ENCODE measurements at regions of chr12 and their contacts with region 1.

Region 1: GRCh38 chr12:50074936-50075807 is 10.0 kb upstream of the SMARCD1 start:
- DNase-seq: peak; percentile 85
- H3K4me3 Mint-ChIP-seq: no peak overlapping the region
- H3K27ac Mint-ChIP-seq: peak overlapping the region; percentile 30
- H3K4me1 Mint-ChIP-seq: peaks cover 12% of the 10 kb centered on the region
- H3K27me3 Mint-ChIP-seq: no peaks in the 10 kb centered on the region
- CTCF ChIP-seq: peak; percentile 90

Region 2: DNA sequence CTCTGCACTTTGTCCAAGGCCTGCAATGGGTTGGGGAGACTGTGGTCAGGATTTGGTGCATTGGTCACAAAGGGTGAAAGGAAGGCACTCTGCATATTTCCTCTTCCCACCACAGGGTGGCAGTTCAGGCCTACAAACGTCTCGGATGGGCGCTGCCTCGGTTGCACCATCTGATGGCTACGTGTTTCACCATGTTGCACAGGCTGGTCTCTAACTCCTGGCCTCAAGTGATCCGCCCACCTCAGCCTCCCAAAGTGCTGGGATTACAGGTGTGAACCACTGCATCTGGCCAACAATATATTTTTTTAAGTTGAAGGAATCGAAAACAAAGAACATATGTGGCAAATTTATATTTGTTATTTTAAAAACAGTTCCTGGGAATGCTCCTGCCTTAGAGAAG is 298.8 kb before region 1 on chr12:
- CTCF ChIA-PET with region 1: interaction called, 6 read pairs
- POLR2A ChIA-PET with region 1: no interaction called
- intact Hi-C with region 1: loop called (anchors 1 kb)
- DNase-seq: peak; percentile 82
- H3K4me3 Mint-ChIP-seq: no peak overlapping the region
- H3K27ac Mint-ChIP-seq: peak overlapping the region; percentile 42
- H3K4me1 Mint-ChIP-seq: peaks cover 17% of the 10 kb centered on the region
- H3K27me3 Mint-ChIP-seq: peaks cover 20% of the 10 kb centered on the region
- CTCF ChIP-seq: peak; percentile 92

Region 3: GRCh38 chr12:49903695-49904423 is 171.3 kb before region 1 on chr12 and contains the start of gene FAIM2:
- CTCF ChIA-PET with region 1: no interaction called
- POLR2A ChIA-PET with region 1: no interaction called
- intact Hi-C with region 1: no loop called
- DNase-seq: no peak
- H3K4me3 Mint-ChIP-seq: no peak within 1 kb of the TSS
- H3K27ac Mint-ChIP-seq: no peak within 1 kb of the TSS
- H3K4me1 Mint-ChIP-seq: no peaks in the 10 kb centered on the region
- H3K27me3 Mint-ChIP-seq: peaks cover 41% of the 10 kb centered on the region
- CTCF ChIP-seq: no peak
- total RNA-seq, gene FAIM2: not detected in 2 replicates

Region 4: DNA sequence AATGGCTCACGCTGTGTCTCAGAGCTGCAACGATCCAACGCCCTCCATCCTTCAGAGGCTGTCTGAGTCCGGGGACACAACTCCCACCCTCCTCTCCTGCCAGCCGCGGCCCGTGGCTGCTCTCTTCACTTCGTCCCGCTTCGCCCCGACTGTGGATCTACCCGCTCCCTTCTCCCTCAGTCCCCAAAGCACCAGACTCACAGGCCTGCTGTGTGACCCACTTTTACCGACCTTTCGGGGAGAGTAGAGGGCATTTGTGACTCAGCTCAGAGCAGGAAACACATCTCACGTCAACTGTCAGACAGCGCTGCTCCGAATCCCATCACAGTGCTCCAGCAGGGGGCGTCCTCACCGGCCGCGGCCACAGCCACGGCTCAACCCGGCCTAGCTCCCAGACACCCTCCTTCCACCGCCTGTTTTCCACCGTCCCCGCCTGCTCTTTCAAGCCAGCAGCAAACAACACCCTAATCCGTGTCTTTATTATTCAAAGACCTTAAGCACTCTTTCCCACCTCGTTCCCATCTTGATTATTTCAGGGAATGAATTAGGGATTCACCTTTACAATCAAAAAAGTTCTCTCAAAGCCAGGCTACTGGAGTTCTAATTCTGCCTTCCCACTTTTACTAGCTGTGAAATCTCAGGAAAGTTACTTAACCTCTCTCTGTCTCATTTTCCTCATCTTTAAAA is 129.6 kb before region 1 on chr12:
- CTCF ChIA-PET with region 1: interaction called, 10 read pairs
- POLR2A ChIA-PET with region 1: no interaction called
- intact Hi-C with region 1: no loop called
- DNase-seq: peak; percentile 77
- H3K4me3 Mint-ChIP-seq: no peak overlapping the region
- H3K27ac Mint-ChIP-seq: peak overlapping the region; percentile 47
- H3K4me1 Mint-ChIP-seq: peaks cover 19% of the 10 kb centered on the region
- H3K27me3 Mint-ChIP-seq: no peaks in the 10 kb centered on the region
- CTCF ChIP-seq: peak; percentile 83

Region 5: GRCh38 chr12:50038336-50038735 is 36.8 kb before region 1 on chr12:
- CTCF ChIA-PET with region 1: interaction called, 35 read pairs
- POLR2A ChIA-PET with region 1: interaction called, 3 read pairs
- intact Hi-C with region 1: no loop called
- DNase-seq: no peak
- H3K4me3 Mint-ChIP-seq: no peak overlapping the region
- H3K27ac Mint-ChIP-seq: no peak overlapping the region
- H3K4me1 Mint-ChIP-seq: peaks cover 7% of the 10 kb centered on the region
- H3K27me3 Mint-ChIP-seq: no peaks in the 10 kb centered on the region
- CTCF ChIP-seq: no peak

Region 6: DNA sequence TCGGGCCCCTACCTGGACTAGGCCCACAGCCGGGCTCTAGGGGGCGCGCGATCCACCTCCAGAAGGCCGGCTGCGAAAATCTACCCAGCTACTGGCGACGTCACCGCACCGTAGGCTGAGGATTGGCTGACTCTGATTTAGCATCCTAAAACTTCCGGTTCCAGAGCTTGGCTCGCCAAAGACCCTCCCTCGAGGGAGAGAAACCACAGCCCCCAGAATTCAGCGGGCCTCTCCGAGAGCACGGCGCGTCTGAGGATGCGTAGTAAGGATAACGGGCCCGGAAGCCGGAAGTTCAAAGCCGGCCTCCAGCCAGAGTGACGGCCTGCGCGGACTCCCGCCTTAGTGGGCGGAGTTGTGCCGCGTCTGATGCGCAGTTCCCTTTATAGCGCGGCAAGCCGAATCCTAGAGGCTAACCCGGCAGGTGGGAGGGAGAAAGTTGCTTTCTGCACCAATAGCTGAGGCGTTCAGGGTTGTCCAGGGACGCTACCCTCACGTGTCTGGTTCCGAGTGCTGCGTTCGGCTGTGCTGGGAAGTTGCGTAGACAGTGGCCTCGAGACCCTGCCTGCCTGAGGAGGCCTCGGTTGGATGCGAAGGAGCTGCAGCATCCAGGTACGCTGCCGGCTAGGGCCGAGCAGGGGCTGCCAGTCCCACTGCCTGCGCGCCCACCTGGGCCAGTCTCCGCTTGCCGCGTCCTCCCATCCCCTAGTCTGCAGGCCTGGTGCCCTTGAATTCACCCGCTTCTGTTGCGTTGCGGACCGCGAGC is 36.7 kb after region 1 on chr12 and contains the start of gene COX14:
- CTCF ChIA-PET with region 1: interaction called, 12 read pairs
- POLR2A ChIA-PET with region 1: interaction called, 4 read pairs
- intact Hi-C with region 1: loop called (anchors 1 kb)
- DNase-seq: peak; percentile 99
- H3K4me3 Mint-ChIP-seq: peak within 1 kb of the TSS; percentile 99
- H3K27ac Mint-ChIP-seq: peak within 1 kb of the TSS; percentile 93
- H3K4me1 Mint-ChIP-seq: peaks cover 12% of the 10 kb centered on the region
- H3K27me3 Mint-ChIP-seq: no peaks in the 10 kb centered on the region
- CTCF ChIP-seq: peak; percentile 80
- total RNA-seq, gene COX14: 43.6 and 45.2 TPM in 2 replicates

Region 7: DNA sequence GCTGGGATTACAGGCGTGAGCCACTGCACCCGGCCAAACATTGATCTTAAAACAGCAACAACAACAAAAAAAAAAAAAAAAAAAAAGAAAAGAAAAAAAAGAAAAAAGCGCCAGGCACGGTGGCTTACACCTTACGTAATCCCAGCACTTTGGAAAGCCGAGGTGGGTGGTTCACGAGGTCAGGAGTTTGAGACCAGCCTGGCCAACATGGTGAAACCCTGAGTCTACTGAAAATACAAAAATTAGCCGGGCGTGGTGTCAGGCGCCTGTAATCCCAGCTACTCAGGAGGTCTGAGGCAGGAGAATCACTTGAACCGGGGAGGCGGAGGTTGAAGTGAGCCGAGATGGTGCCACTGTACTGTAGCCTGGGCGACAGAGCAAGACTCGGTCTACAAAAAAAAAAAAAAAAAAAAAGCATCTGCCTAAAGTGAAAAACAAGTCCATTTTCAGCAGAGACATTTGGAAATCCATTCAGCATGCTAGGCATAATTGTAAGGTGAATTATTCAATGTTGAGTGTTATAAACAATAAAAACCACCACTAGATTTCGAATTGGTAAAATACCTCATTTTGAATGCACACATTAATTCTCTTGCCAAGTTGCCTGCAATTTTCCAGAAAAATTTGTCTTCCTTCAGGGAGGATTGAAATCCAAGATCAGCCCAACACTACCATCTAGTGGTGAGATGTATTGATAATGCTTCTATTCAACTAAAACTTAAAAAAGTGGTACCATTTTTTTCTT is 100.0 kb after region 1 on chr12:
- CTCF ChIA-PET with region 1: interaction called, 16 read pairs
- POLR2A ChIA-PET with region 1: no interaction called
- intact Hi-C with region 1: loop called (anchors 1 kb)
- DNase-seq: peak; percentile 81
- H3K4me3 Mint-ChIP-seq: no peak overlapping the region
- H3K27ac Mint-ChIP-seq: no peak overlapping the region
- H3K4me1 Mint-ChIP-seq: no peaks in the 10 kb centered on the region
- H3K27me3 Mint-ChIP-seq: no peaks in the 10 kb centered on the region
- CTCF ChIP-seq: peak; percentile 64

Region 8: GRCh38 chr12:50637870-50638481 is 562.8 kb after region 1 on chr12:
- CTCF ChIA-PET with region 1: no interaction called
- POLR2A ChIA-PET with region 1: no interaction called
- intact Hi-C with region 1: loop called (anchors 10 kb)
- DNase-seq: peak; percentile 36
- H3K4me3 Mint-ChIP-seq: no peak overlapping the region
- H3K27ac Mint-ChIP-seq: no peak overlapping the region
- H3K4me1 Mint-ChIP-seq: peaks cover 18% of the 10 kb centered on the region
- H3K27me3 Mint-ChIP-seq: no peaks in the 10 kb centered on the region
- CTCF ChIP-seq: peak; percentile 40

Region 9: GRCh38 chr12:50922820-50923219 is 847.6 kb after region 1 on chr12:
- CTCF ChIA-PET with region 1: no interaction called
- POLR2A ChIA-PET with region 1: no interaction called
- intact Hi-C with region 1: no loop called
- DNase-seq: no peak
- H3K4me3 Mint-ChIP-seq: peak overlapping the region; percentile 28
- H3K27ac Mint-ChIP-seq: peak overlapping the region; percentile 93
- H3K4me1 Mint-ChIP-seq: peaks cover 26% of the 10 kb centered on the region
- H3K27me3 Mint-ChIP-seq: no peaks in the 10 kb centered on the region
- CTCF ChIP-seq: no peak

Measured in MCF 10A (cell line).